ENCODE measurements at regions of chr21 and their contacts with region 1.

Region 1: GRCh38 chr21:38712071-38712470 is 93.7 kb upstream of the ETS2 start:
- DNase-seq: no peak
- ATAC-seq: no peak

Region 2: DNA sequence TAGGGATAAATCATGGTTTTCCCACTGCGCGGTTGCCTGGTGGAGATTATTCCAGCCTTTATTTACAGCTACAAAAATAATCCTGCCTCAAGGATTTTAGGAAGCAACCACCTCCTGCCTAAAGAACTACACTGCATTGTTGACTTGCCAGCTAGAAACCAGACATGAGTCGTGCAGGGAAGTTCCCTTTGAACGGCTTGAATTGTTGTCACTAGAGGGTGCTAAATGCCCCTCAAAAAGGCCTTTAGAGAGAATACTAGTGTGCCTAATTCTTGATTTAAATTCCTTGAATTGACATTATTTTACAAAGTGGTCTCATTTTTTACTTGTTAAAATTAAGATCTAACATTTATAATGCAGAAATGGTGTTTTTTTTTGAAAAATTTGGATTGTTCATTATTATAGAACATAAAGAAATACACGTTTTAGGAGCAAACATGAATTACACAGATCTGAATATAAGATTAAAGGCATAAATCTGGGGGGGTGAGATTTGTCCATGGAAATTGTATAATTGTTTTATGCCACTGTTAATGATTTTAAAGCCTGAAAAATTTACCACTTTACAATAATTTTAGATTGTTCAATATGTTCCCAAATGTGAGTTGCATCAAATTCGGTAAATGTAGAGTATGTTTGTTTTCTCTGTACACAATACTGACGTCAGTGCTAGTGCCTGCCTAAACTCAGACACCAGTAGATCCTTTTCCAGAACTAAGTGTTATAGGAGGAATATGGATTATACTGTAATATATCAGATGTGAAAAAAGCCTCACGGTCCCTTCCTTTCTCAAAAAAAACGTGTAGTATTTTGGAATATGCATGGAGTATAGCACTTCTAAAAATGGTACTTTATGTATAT is 206.2 kb before region 1 on chr21:
- intact Hi-C with region 1: loop called (anchors 10 kb)
- DNase-seq: no peak
- ATAC-seq: peak; percentile 89

Region 3: DNA sequence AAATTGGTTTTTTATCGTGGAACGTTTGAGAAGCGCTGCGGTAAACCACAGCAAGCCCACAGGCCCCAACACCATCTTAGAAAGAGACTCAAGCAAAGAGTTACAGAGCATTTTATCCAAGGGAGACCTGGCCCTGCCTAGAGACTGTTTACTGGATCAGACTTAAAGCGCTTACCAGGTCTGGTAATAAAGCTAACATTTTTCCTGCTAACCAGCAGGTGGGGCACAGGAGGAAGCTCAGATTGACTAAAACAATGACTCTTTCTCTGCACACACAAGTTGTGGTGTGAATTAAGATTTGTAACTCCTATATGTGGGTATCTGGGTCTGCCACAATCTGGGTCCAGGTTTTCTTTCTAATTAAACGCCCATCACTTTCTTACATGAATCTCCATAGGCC is 42.9 kb before region 1 on chr21:
- intact Hi-C with region 1: no loop called
- DNase-seq: no peak
- ATAC-seq: no peak